Panc1 (cell line): ENCODE measurements at regions of chr18 and their contacts with region 1.

Region 1: DNA sequence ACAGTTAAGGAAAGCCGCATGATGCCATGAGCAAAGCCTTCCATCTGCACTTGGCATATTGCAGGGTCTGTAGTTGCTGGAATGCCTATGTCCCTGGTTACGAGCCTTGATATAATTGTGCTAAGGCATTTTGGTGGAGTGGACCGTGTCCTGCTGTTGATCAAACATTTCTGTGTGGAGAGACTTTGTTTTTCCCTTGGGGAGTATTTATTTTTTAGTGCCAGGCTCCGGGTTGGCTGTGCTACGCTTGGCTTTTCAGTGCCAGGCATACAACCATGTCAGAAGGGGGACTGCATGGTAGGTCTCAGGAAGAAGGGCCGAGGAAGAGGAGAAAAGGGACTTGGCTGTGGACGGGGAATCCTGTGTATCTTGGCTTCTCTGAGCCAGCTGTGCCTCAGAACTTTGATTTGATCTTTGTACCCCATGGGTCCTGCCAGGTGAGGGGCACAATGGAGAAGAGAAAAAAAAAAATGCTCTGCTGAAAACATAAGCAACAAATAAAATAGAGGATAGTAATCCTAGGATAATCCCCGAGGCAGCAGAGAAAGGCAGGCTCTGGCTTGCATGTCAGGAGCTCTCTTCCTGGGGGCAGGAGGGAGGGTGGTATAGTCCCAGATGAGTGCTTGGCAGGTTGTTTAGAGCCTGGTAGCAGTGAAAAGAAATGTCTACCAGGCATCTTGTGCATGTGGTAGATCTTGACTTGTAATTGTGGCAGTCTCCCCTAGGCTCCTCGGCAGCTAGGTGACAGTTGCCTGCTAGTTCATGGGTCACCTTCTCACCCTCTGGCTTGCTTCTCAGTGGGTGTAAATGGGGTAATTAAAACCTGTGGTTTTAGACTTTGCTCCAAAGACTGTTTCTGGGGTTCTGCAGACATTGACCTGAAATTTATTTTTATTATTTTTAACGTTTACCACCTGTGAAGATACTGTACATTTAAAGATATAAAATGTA is 233.0 kb downstream of the NEDD4L start:
- DNase-seq: no peak
- ATAC-seq: peak; percentile 34; the same call in 1 of the 2 replicates
- H3K4me3 ChIP-seq: no peak overlapping the region
- H3K27ac ChIP-seq: no peak overlapping the region
- H3K4me1 ChIP-seq: peaks cover 2% of the 10 kb centered on the region; the same call in 1 of the 2 replicates
- H3K27me3 ChIP-seq: no peaks in the 10 kb centered on the region
- CTCF ChIP-seq: no peak

Region 2: GRCh38 chr18:57666818-57667497 is 610.1 kb before region 1 on chr18:
- CTCF ChIA-PET with region 1: no interaction called
- POLR2A ChIA-PET with region 1: no interaction called
- in situ Hi-C with region 1: no loop called
- intact Hi-C with region 1: no loop called
- DNase-seq: no peak
- ATAC-seq: no peak
- H3K4me3 ChIP-seq: no peak overlapping the region
- H3K27ac ChIP-seq: no peak overlapping the region
- H3K4me1 ChIP-seq: no peaks in the 10 kb centered on the region; the same call in 1 of the 2 replicates
- H3K27me3 ChIP-seq: no peaks in the 10 kb centered on the region
- CTCF ChIP-seq: no peak

Region 3: DNA sequence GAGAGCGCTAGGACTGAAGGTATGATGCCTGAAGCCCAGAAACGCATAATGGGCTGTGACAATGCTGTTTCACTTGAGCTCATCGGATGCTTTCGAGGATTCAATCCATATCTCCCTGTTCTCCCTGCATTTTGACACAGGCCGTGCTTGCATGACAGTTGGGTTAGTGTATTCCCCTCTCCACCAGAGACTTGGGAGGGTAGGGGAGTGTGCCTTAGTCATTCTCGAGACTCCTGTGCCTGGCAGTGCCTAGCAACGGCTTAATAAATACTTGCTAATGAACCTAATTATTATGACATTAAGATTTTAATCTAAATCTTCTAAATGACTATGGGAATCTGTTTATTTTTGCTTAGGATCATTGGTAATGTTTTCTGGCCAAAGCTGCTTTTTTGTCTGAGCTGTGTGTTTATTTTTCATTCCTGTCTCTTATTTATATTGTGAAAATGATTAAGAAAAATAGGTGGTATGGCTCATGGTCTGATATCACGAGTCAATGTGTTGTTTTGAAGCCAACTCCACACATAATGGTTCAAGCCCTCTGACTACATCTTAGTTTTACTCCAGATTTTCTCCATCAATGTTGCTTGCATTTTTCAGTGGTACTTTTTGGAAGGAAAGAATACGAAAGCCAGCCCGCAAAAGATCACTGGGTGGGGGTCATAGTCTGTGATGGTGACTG is 171.7 kb before region 1 on chr18:
- CTCF ChIA-PET with region 1: interaction called, 15 read pairs
- POLR2A ChIA-PET with region 1: no interaction called
- in situ Hi-C with region 1: no loop called
- intact Hi-C with region 1: no loop called
- DNase-seq: no peak
- ATAC-seq: no peak
- H3K4me3 ChIP-seq: no peak overlapping the region
- H3K27ac ChIP-seq: no peak overlapping the region
- H3K4me1 ChIP-seq: no peaks in the 10 kb centered on the region
- H3K27me3 ChIP-seq: no peaks in the 10 kb centered on the region
- CTCF ChIP-seq: no peak